OCI-LY7 (cell line): ENCODE measurements at regions of chr11 and their contacts with region 1.

Region 1: DNA sequence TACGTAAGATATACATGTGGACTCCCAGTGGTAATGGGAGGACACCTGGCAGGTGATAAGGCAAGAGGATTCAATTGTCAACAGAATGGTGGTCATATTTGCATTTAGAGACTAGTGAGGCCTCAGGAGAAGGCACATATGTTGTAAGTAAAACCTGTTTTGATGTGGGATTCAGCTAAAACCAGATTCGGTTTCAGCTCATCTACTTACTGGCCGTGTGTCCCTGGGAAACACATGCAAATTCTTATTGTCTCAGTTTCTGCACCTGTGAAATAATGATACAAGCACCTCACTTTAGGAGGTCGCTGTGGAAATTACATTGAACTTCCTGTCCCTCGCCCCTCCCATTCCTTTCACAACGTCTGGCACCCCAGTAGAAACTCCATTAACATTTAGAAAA is 78.9 kb upstream of the FIBIN start:
- DNase-seq: peak; percentile 94
- H3K4me3 ChIP-seq: peak overlapping the region; percentile 32
- H3K27ac ChIP-seq: peak overlapping the region; percentile 97
- H3K4me1 ChIP-seq: peaks cover 71% of the 10 kb centered on the region
- CTCF ChIP-seq: no peak

Region 2: DNA sequence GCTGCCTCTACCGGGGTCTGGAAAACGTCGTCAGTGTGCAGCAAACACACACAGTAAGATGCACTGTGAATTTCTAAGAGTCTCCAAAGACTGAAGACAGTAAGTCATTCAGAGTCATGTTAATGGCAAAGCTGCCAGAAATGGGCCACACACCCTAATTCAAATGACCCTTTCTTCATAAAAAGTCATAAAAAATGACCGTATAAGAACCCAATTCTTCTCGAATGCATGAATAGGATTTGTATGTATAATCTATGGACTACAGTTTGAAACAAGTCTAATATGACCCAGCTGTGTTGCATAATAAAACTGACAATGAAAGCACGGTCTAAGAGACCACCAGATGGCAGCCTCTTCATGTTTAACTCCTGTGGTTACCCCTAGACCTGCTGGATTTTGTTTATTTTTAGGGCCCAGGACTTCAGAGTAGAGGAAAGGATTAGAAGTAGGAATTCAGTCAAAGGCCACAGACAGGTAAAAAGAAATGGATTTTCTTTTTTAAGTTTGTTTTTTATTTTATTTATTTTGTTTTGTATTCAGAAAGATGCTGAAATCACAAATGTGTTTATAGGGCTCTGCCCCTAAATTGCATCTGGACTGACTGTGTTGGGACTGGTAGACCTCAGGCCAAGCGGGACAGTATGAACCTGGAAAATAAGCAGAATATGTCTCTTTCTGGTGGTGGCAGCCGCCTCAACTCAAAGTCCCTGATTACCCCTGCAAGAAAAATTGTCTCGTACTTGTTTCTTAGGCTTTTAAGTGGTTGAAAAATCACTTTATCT is 161.1 kb before region 1 on chr11:
- CTCF ChIA-PET with region 1: no interaction called
- POLR2A ChIA-PET with region 1: no interaction called
- intact Hi-C with region 1: loop called (anchors 2 kb)
- DNase-seq: peak; percentile 75
- H3K4me3 ChIP-seq: no peak overlapping the region
- H3K27ac ChIP-seq: no peak overlapping the region
- H3K4me1 ChIP-seq: no peaks in the 10 kb centered on the region
- CTCF ChIP-seq: peak; percentile 97

Region 3: DNA sequence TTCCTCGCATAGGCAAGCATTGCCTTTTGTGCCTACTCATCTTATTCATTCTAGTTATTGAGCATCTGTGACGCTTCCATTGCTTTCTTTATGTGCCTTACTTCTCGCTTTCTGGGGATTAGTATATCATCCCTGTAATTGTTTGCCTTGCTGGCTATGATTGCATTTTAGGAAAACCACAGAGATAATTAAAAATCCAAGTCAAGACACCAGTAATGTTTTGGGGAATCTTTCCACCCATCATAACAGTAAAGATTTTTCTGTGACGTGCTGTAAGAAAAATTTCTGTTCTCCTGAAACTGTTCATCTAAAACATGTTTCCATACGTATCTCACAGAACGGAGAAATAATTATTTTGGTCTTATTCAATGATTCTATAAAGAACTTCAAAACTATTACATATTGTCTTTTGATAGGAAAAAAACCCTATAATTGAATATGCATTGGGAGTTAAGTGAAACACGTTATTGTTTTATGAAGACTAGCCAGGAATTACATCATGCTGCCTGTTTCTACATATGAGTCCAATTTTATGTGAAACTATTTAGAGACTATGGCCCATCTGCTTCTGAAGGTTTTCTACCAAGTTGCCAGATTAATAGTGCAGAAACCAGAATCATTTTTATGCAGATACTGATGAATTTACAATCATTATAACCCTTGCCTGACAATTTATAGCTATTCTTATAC is 54.7 kb before region 1 on chr11:
- CTCF ChIA-PET with region 1: no interaction called
- POLR2A ChIA-PET with region 1: no interaction called
- intact Hi-C with region 1: no loop called
- DNase-seq: no peak
- H3K4me3 ChIP-seq: no peak overlapping the region
- H3K27ac ChIP-seq: no peak overlapping the region
- H3K4me1 ChIP-seq: no peaks in the 10 kb centered on the region
- CTCF ChIP-seq: no peak

Region 4: GRCh38 chr11:26960281-26960680 is 45.3 kb after region 1 on chr11:
- CTCF ChIA-PET with region 1: no interaction called
- POLR2A ChIA-PET with region 1: no interaction called
- intact Hi-C with region 1: loop called (anchors 5 kb)
- DNase-seq: no peak
- H3K4me3 ChIP-seq: no peak overlapping the region
- H3K27ac ChIP-seq: no peak overlapping the region
- H3K4me1 ChIP-seq: peaks cover 11% of the 10 kb centered on the region
- CTCF ChIP-seq: no peak

Region 5: DNA sequence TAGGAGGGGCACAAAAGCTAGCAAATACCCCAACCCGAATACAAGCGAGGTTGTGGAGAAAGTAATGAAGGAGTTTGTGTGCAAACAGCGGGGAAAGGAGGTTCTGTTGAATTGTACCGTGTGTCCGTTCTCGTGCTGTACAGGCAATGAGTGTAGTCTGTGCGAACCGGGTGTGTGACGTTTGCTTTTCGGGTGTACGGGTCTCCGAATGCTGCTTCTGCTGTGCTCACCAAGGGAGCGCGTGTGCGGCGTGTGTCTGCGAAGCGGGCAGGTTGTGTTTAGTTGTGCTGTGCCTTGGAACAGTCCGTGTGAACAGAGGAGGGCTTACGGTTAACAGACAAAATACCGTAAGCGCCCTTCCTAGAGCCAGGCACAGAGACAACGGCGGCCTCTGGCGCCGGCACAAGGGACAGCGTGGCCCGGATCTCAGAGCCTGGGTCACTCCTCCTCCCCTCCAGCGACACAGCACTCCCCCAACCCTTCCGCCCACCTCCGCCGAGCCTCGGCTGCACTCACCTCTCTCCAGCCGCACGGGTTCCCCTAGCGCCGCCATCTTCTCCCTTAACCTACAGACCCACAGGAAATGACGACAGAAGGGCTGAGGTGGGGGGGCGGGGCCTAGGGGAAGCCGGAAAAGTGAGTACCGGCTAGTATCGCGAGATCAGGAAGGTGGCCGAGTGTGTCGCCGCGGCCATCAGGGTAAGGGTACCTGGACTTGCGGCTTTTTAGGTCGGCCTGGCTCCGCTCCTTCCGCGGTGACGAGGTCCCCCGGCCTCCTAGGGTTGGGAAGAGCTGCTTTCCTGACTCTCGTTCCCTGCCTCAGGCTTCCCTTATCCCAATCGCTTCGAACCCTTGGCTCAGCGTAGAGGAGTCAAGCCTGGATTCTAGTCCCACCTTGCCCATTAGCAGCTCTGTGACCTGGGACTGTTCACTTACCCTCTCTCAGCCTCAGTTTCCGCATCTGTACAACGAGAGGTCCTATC is 591.5 kb after region 1 on chr11 and contains the start of gene LIN7C:
- CTCF ChIA-PET with region 1: no interaction called
- POLR2A ChIA-PET with region 1: no interaction called
- intact Hi-C with region 1: loop called (anchors 10 kb)
- DNase-seq: peak; percentile 97
- H3K4me3 ChIP-seq: peak within 1 kb of the TSS; percentile 97
- H3K27ac ChIP-seq: peak within 1 kb of the TSS; percentile 78
- H3K4me1 ChIP-seq: peaks cover 21% of the 10 kb centered on the region
- CTCF ChIP-seq: peak; percentile 39
- total RNA-seq, gene LIN7C: 19.7 and 22.7 TPM in 2 replicates